GM10248 (cell line): ENCODE measurements at regions of chr6 and their contacts with region 1.

Region 1: GRCh38 chr6:25070547-25071366 is 135.0 kb upstream of the RIPOR2 start:
- DNase-seq: peak; percentile 69
- CTCF ChIP-seq: peak; percentile 78

Region 2: GRCh38 chr6:24855395-24856245 is 215.1 kb before region 1 on chr6:
- CTCF ChIA-PET with region 1: interaction called, 42 read pairs
- POLR2A ChIA-PET with region 1: no interaction called
- DNase-seq: peak; percentile 78
- CTCF ChIP-seq: peak; percentile 81

Region 3: GRCh38 chr6:25017932-25018567 is 52.7 kb before region 1 on chr6:
- CTCF ChIA-PET with region 1: interaction called, 28 read pairs
- POLR2A ChIA-PET with region 1: no interaction called
- DNase-seq: peak; percentile 70
- CTCF ChIP-seq: peak; percentile 82

Region 4: DNA sequence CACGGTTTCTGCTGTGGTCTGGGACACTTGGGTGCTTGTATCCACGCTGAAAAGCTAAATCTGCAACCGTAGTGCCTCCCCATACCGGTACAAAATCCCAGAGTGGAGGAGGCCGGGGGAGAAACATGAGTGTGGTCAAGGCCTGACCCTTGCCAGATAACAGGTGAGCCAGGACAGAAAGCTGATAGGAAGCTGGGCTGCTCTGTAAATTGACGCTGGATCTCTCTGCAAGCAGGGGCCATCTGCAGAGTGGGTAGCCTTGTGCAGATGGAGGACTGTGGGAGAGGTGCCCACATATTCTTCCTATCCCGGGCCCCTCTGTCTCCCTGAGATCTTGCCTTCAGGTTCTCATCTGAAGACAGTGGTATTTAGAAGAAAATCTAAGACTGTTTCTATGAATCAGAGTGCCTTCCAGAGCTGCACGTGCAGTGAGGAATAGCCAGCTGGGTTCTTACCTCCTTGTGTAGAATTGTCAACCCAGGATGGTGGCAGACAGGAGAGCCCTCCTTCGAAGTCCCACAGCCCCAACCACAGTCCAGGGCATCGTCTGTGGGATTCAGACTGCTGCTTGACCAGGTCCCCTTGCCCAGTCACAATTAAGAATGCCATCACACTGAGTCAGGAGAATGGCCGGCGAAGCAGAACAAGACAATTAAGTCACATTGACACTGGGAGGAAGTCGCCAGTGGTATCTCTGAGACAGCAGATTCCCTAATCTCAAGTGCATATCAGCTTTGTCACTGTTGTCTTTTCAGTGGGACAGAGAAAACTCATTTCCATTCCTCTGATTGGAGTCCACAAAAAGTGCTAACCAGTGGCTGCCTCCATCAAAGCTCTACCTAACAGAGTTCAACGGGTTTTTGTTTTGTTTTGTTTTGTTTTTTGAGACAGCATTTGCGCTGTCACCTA is 35.0 kb before region 1 on chr6:
- CTCF ChIA-PET with region 1: interaction called, 132 read pairs
- POLR2A ChIA-PET with region 1: no interaction called
- DNase-seq: no peak
- CTCF ChIP-seq: no peak

Region 5: DNA sequence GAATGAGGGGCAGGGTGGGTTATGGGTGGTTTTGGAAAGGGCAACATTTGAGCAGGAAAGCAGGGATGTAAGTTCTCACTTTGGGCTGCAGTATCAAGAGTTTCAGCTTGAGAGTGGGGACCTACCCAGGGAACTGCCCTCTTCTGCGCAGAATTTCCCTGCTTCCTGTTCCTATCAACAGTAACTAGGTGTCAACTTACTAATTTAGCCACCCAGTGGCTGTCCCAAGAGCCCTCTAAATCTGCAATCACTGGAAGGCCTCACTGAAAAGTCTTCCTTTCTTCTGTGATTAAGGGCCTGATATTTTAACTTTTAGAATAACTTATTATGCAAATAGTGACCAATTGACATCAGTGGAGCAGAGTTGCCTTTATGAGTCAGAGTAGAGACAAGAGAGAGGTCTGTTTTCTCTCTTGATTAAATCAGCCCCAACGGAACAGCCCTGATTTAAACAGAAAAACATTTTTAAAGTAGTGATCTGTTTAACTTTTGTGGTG is 16.8 kb before region 1 on chr6:
- CTCF ChIA-PET with region 1: interaction called, 17 read pairs
- POLR2A ChIA-PET with region 1: no interaction called
- DNase-seq: peak; percentile 48
- CTCF ChIP-seq: peak; percentile 13

Region 6: GRCh38 chr6:25088513-25088912 is 17.8 kb after region 1 on chr6:
- CTCF ChIA-PET with region 1: interaction called, 14 read pairs
- POLR2A ChIA-PET with region 1: no interaction called
- DNase-seq: no peak
- CTCF ChIP-seq: no peak

Region 7: GRCh38 chr6:25435416-25435985 is 364.7 kb after region 1 on chr6:
- CTCF ChIA-PET with region 1: no interaction called
- POLR2A ChIA-PET with region 1: no interaction called
- DNase-seq: no peak
- CTCF ChIP-seq: no peak